Activated naive CD4-positive, alpha-beta T cell treated with anti-CD3 and anti-CD28 coated beads for 36 hours (primary cell): ENCODE measurements at regions of chr16 and their contacts with region 1.

Region 1: DNA sequence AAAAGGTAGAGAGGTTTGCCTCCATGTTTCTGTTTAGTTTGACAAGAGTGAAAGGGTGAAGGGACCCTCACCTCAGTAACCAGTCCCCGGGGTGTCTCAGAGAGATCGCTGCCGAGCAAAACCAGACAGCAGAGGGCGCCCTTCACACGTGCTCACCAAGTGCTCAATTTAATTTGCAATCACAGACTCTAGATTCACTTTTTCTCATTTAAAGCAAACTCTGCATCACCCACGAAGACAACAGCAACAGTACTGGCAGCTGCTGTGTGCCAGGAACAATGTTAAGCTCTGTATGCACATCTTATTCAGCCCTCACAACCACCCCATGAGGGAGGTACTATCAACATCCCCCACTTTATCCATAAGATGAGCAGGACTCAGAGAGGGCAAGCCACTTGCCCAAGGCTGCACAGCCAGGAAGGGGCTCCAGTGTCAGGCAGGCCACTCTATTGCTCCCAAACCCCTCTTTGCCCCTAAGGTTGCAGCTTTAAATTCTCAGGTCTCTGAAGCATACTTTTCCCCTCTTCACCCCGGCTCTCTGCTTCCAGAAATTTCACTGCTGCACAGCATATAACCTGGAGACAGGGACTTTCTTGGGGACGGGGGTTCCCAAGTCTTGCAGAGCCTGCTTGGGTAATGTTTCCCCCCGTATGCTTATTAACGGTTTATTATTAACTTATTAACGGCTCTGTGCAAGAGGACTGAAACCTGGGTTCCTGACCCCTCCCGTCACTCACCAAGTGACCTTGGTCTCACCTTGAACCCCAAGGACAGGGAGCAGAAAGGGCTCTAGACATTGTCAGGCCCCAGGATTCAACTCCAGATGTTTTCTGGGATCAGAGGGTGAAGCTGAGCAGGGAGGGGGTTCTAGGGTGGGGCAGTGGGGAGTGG is 70.9 kb downstream of the CNGB1 start:
- DNase-seq: peak; percentile 83
- H3K4me3 Mint-ChIP-seq: no peak overlapping the region
- H3K27ac Mint-ChIP-seq: no peak overlapping the region
- H3K4me1 Mint-ChIP-seq: no peaks in the 10 kb centered on the region
- H3K27me3 Mint-ChIP-seq: peaks cover 3% of the 10 kb centered on the region

Region 2: GRCh38 chr16:57675741-57676584 is 224.1 kb before region 1 on chr16:
- CTCF ChIA-PET with region 1: no interaction called
- intact Hi-C with region 1: no loop called
- DNase-seq: no peak
- H3K4me3 Mint-ChIP-seq: no peak overlapping the region
- H3K27ac Mint-ChIP-seq: no peak overlapping the region
- H3K4me1 Mint-ChIP-seq: no peaks in the 10 kb centered on the region
- H3K27me3 Mint-ChIP-seq: no peaks in the 10 kb centered on the region

Region 3: GRCh38 chr16:57757326-57757786 is 142.7 kb before region 1 on chr16:
- CTCF ChIA-PET with region 1: interaction called, 7 read pairs
- intact Hi-C with region 1: loop called (anchors 2 kb)
- DNase-seq: peak; percentile 94
- H3K4me3 Mint-ChIP-seq: no peak overlapping the region
- H3K27ac Mint-ChIP-seq: no peak overlapping the region
- H3K4me1 Mint-ChIP-seq: no peaks in the 10 kb centered on the region
- H3K27me3 Mint-ChIP-seq: no peaks in the 10 kb centered on the region

Region 4: GRCh38 chr16:57802341-57803133 is 97.5 kb before region 1 on chr16 and contains the start of gene KIFC3:
- CTCF ChIA-PET with region 1: no interaction called
- intact Hi-C with region 1: loop called (anchors 5 kb)
- DNase-seq: peak; percentile 82
- H3K4me3 Mint-ChIP-seq: peak within 1 kb of the TSS; percentile 69
- H3K27ac Mint-ChIP-seq: no peak within 1 kb of the TSS
- H3K4me1 Mint-ChIP-seq: peaks cover 23% of the 10 kb centered on the region
- H3K27me3 Mint-ChIP-seq: peaks cover 33% of the 10 kb centered on the region
- total RNA-seq, gene KIFC3: 0.12 TPM in 1 of 2 experiments, not detected in the other

Region 5: DNA sequence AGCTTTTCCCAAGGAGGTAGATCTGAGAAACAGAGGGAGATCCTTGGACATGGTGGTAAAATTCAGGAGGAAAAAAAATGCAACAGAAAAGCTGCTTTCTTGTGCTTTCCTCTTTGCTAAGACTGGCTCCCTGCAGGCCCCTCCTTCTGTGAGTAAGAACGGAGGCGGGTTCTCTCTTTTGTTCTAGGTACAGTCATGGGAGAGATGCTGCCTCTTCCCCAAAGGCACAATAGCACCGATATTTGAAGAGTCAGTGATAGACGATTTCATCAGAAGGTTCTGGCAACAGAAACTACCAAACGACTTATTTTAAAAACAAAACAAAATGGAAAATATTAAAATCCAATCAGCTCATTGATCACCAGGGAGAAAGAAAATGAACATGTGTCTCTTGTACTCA is 65.1 kb before region 1 on chr16:
- CTCF ChIA-PET with region 1: no interaction called
- intact Hi-C with region 1: no loop called
- DNase-seq: no peak
- H3K4me3 Mint-ChIP-seq: no peak overlapping the region
- H3K27ac Mint-ChIP-seq: no peak overlapping the region
- H3K4me1 Mint-ChIP-seq: no peaks in the 10 kb centered on the region
- H3K27me3 Mint-ChIP-seq: no peaks in the 10 kb centered on the region

Region 6: DNA sequence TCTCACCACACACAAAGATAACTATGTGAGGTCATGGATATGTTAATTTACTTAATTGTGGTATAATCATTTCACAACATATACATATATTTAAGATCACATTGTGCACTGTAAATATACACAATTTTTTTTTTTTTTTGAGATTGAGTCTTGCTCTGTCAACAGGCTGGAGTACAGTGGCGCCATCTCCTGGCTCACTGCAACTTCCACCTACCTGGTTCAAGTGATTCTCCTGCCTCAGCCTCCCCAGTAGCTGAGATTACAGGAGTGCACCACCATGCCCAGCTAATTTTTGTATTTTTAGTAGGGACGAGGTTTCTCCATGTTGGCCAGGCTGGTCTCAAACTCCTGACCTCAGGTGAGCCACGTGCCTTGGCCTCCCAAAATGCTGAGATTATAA is 406.3 kb after region 1 on chr16:
- CTCF ChIA-PET with region 1: no interaction called
- intact Hi-C with region 1: loop called (anchors 5 kb)
- DNase-seq: peak; percentile 82
- H3K4me3 Mint-ChIP-seq: no peak overlapping the region
- H3K27ac Mint-ChIP-seq: no peak overlapping the region
- H3K4me1 Mint-ChIP-seq: no peaks in the 10 kb centered on the region
- H3K27me3 Mint-ChIP-seq: peaks cover 2% of the 10 kb centered on the region

Region 7: DNA sequence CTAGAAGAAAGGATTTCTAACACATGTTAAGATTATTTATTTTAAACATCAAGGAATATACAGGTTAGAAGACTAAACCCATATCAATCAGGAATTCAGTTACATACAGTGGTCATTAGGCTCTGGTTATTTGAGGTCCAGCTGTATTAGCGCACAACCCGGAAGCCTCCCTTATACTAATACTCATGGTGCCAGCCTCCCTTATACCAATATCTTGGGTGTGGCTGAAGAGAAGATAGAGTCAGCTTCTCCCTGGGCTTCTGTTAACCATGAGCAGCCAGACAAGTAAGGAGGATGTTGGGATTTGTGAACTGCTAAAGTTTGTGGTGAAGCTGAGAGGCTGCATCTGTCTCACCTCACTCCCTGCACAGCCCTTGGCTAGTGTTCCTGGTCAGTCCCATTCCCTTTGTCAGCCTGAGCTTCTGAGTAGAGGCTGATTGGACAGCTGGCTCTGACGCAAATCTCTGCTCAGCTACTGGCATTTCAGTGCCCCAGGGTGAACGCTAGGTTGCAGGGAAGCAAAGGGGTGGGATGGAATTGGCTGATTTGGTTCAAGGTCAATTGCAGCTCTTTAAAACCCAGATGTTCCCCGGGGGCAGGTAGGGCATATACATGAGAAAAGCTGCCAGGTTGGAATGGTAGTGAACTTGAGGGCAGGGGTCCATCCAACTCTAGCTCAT is 752.6 kb after region 1 on chr16:
- CTCF ChIA-PET with region 1: no interaction called
- intact Hi-C with region 1: no loop called
- DNase-seq: no peak
- H3K4me3 Mint-ChIP-seq: no peak overlapping the region
- H3K27ac Mint-ChIP-seq: no peak overlapping the region
- H3K4me1 Mint-ChIP-seq: no peaks in the 10 kb centered on the region
- H3K27me3 Mint-ChIP-seq: no peaks in the 10 kb centered on the region